CD8-positive, alpha-beta memory T cell (primary cell): ENCODE measurements at regions of chr5 and their contacts with region 1.

Region 1: GRCh38 chr5:52989781-52990527 is 802 bp downstream of the ITGA2 start:
- DNase-seq: peak; percentile 2 to 52 (median 9)
- H3K4me3 ChIP-seq: peak overlapping the region; percentile 56
- H3K4me3 Mint-ChIP-seq: peak overlapping the region; percentile 71 to 87 (median 75)
- H3K27ac ChIP-seq: no peak overlapping the region
- H3K27ac Mint-ChIP-seq: no peak overlapping the region
- H3K4me1 ChIP-seq: peaks cover 6% of the 10 kb centered on the region
- H3K4me1 Mint-ChIP-seq: peaks cover 4 to 19% (median 15%) of the 10 kb centered on the region in 3 donors
- H3K27me3 ChIP-seq: no peaks in the 10 kb centered on the region
- H3K27me3 Mint-ChIP-seq: peaks cover 0 to 16% of the 10 kb centered on the region in 2 donors

Region 2: GRCh38 chr5:52826566-52826965 is 163.4 kb before region 1 on chr5:
- CTCF ChIA-PET with region 1: no interaction called
- POLR2A ChIA-PET with region 1: interaction called, 11 read pairs
- DNase-seq: no peak
- H3K4me3 ChIP-seq: no peak overlapping the region
- H3K4me3 Mint-ChIP-seq: no peak overlapping the region
- H3K27ac ChIP-seq: no peak overlapping the region
- H3K27ac Mint-ChIP-seq: no peak overlapping the region
- H3K4me1 ChIP-seq: no peaks in the 10 kb centered on the region
- H3K4me1 Mint-ChIP-seq: peaks cover 11 to 24% (median 14%) of the 10 kb centered on the region in 3 donors
- H3K27me3 ChIP-seq: no peaks in the 10 kb centered on the region
- H3K27me3 Mint-ChIP-seq: no peaks in the 10 kb centered on the region

Region 3: DNA sequence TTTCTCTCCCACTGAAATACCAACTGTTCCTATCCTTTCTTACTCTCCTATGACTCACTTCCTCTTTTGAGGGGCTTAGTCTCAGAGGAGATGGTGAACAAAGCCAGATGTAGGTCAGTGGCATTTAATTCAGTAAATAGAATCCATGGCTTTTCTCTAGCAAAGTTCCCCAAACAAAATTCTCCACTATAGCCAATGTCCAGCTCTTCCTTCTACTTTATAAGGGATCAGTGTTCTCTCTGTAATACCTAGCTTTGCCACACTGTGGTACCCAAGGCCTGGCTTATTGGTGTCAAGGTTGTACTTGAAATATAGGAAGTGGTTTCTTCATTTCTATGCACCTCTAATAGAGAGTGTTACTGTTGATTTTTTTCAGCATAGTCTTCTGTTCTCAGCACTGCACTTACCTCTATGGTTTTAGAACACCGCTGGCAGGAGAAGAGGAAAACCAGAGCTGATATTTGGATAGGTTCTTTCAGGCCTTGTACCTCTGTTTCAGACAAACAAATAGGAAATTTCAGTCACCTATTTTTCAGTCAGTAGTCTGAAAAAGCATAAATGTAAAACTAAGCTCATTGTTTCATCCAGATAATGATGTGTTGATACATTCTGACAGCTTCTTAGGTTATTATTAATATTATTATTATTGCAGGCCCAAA is 41.4 kb before region 1 on chr5:
- CTCF ChIA-PET with region 1: interaction called, 11 read pairs
- POLR2A ChIA-PET with region 1: no interaction called
- DNase-seq: peak; percentile 19 to 73 (median 58)
- H3K4me3 ChIP-seq: no peak overlapping the region
- H3K4me3 Mint-ChIP-seq: no peak overlapping the region
- H3K27ac ChIP-seq: no peak overlapping the region
- H3K27ac Mint-ChIP-seq: peak overlapping the region in 2 of 8 donors; percentile 15 to 41
- H3K4me1 ChIP-seq: peaks cover 3% of the 10 kb centered on the region
- H3K4me1 Mint-ChIP-seq: peaks cover 14 to 25% (median 23%) of the 10 kb centered on the region in 3 donors
- H3K27me3 ChIP-seq: no peaks in the 10 kb centered on the region
- H3K27me3 Mint-ChIP-seq: peaks cover 0 to 4% of the 10 kb centered on the region in 2 donors